AG04450 (cell line): ENCODE measurements at regions of chr5 and their contacts with region 1.

Region 1: DNA sequence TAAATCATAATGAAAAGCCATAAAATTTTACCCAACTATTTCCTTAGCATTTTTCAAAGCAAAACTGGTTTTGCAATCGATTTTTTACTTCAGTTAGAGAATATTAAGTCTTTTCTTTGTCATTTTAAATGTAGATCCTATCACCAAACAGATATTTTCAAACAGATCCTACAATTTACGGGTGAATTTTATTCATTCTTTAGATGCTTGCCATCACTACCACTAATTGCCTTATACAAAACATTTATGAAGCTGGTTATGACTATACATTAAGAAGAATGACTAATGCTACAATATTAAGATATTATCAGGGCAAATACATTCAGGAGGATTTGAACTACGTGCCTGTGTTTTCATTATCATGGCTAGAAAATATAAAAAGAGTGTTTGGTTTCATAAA is 196.9 kb downstream of the CWC27 start:
- DNase-seq: no peak
- H3K4me3 ChIP-seq: no peak overlapping the region
- H3K27ac ChIP-seq: no peak overlapping the region
- H3K27me3 ChIP-seq: no peaks in the 10 kb centered on the region
- CTCF ChIP-seq: no peak

Region 2: GRCh38 chr5:64587370-64587769 is 378.2 kb before region 1 on chr5:
- CTCF ChIA-PET with region 1: no interaction called
- POLR2A ChIA-PET with region 1: no interaction called
- DNase-seq: no peak
- H3K4me3 ChIP-seq: no peak overlapping the region
- H3K27ac ChIP-seq: no peak overlapping the region
- H3K27me3 ChIP-seq: peaks cover 4% of the 10 kb centered on the region
- CTCF ChIP-seq: no peak

Region 3: GRCh38 chr5:65243161-65243560 is 277.5 kb after region 1 on chr5:
- CTCF ChIA-PET with region 1: interaction called, 10 read pairs
- POLR2A ChIA-PET with region 1: no interaction called
- DNase-seq: no peak
- H3K4me3 ChIP-seq: no peak overlapping the region
- H3K27ac ChIP-seq: no peak overlapping the region
- H3K27me3 ChIP-seq: no peaks in the 10 kb centered on the region
- CTCF ChIP-seq: no peak